ENCODE measurements at regions of chr17 and their contacts with region 1.

Region 1: GRCh38 chr17:42422958-42423712 is at the start of gene CAVIN1:
- DNase-seq: peak; percentile 98
- H3K4me3 Mint-ChIP-seq: peak within 1 kb of the TSS; percentile 96
- H3K27ac Mint-ChIP-seq: peak within 1 kb of the TSS; percentile 88
- H3K4me1 Mint-ChIP-seq: peaks cover 22% of the 10 kb centered on the region
- H3K27me3 Mint-ChIP-seq: no peaks in the 10 kb centered on the region
- CTCF ChIP-seq: no peak
- total RNA-seq, gene CAVIN1: 137 and 143 TPM in 2 replicates

Region 2: GRCh38 chr17:42322382-42323267 is 100.5 kb before region 1 on chr17:
- CTCF ChIA-PET with region 1: interaction called, 9 read pairs
- POLR2A ChIA-PET with region 1: interaction called, 23 read pairs
- intact Hi-C with region 1: loop called (anchors 5 kb)
- DNase-seq: peak; percentile 93
- H3K4me3 Mint-ChIP-seq: no peak overlapping the region
- H3K27ac Mint-ChIP-seq: peak overlapping the region; percentile 46
- H3K4me1 Mint-ChIP-seq: peaks cover 11% of the 10 kb centered on the region
- H3K27me3 Mint-ChIP-seq: no peaks in the 10 kb centered on the region
- CTCF ChIP-seq: peak; percentile 99

Region 3: GRCh38 chr17:42354956-42355843 is 67.9 kb before region 1 on chr17:
- CTCF ChIA-PET with region 1: no interaction called
- POLR2A ChIA-PET with region 1: no interaction called
- intact Hi-C with region 1: no loop called
- DNase-seq: peak; percentile 46
- H3K4me3 Mint-ChIP-seq: no peak overlapping the region
- H3K27ac Mint-ChIP-seq: no peak overlapping the region
- H3K4me1 Mint-ChIP-seq: no peaks in the 10 kb centered on the region
- H3K27me3 Mint-ChIP-seq: no peaks in the 10 kb centered on the region
- CTCF ChIP-seq: no peak

Region 4: GRCh38 chr17:42388381-42389134 is 34.6 kb before region 1 on chr17 and contains the start of gene STAT3:
- CTCF ChIA-PET with region 1: interaction called, 4 read pairs
- POLR2A ChIA-PET with region 1: interaction called, 60 read pairs
- intact Hi-C with region 1: loop called (anchors 5 kb)
- DNase-seq: peak; percentile 100
- H3K4me3 Mint-ChIP-seq: peak within 1 kb of the TSS; percentile 90
- H3K27ac Mint-ChIP-seq: peak within 1 kb of the TSS; percentile 97
- H3K4me1 Mint-ChIP-seq: peaks cover 25% of the 10 kb centered on the region
- H3K27me3 Mint-ChIP-seq: no peaks in the 10 kb centered on the region
- CTCF ChIP-seq: no peak
- total RNA-seq, gene STAT3: 89.2 and 115 TPM in 2 replicates

Region 5: GRCh38 chr17:42459256-42459800 is 36.2 kb after region 1 on chr17:
- CTCF ChIA-PET with region 1: interaction called, 4 read pairs
- POLR2A ChIA-PET with region 1: interaction called, 36 read pairs
- intact Hi-C with region 1: loop called (anchors 1 kb)
- DNase-seq: peak; percentile 63
- H3K4me3 Mint-ChIP-seq: peak overlapping the region; percentile 92
- H3K27ac Mint-ChIP-seq: peak overlapping the region; percentile 92
- H3K4me1 Mint-ChIP-seq: peaks cover 37% of the 10 kb centered on the region
- H3K27me3 Mint-ChIP-seq: no peaks in the 10 kb centered on the region
- CTCF ChIP-seq: peak; percentile 29

Region 6: GRCh38 chr17:42536048-42536371 is 112.9 kb after region 1 on chr17 and contains the start of gene NAGLU:
- CTCF ChIA-PET with region 1: no interaction called
- POLR2A ChIA-PET with region 1: interaction called, 15 read pairs
- intact Hi-C with region 1: no loop called
- DNase-seq: peak; percentile 84
- H3K4me3 Mint-ChIP-seq: peak within 1 kb of the TSS; percentile 81
- H3K27ac Mint-ChIP-seq: peak within 1 kb of the TSS; percentile 87
- H3K4me1 Mint-ChIP-seq: peaks cover 18% of the 10 kb centered on the region
- H3K27me3 Mint-ChIP-seq: no peaks in the 10 kb centered on the region
- CTCF ChIP-seq: no peak
- total RNA-seq, gene NAGLU: 21.0 and 29.5 TPM in 2 replicates